ENCODE measurements at regions of chr7 and their contacts with region 1.

Region 1: DNA sequence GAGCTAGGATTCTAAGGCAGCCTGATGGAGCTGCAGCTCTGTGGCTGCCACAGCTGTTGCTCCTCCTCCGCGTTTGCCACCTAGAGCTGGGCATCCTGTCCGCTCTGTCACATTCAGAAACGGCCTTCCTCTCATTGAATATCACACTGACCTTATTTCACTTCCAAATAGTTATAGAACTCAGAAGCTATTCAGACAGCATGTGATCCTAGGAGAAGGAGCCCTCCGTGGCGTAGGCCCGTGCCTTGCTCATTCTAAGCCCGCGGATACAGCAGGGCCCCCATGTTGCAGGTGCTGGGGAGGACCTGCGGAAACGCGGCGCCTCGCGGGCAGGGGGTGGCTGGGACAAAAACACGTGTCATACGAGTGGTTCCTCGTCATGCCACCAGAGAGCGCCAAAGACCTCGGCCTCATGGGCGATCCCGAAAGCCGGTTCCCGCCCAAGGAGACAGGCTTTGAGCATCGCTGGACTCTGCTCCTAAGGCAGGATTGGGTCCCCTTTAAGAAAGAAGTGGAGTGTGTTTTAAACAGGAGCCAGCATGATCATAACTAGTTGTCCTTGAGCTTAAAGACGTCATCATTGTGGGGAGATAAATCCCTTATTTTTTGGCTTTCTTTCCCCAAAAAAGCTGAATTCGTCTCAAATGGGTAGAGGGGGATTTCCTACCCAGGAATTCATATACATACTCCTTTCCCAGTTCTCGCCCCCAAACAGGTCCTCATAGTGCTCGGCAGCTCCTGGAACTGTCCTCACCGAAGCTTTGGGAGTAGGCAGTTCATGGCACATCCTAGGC is 17.9 kb upstream of the FIGNL1 start:
- DNase-seq: peak; percentile 93
- H3K4me3 ChIP-seq: peak overlapping the region in 1 of 2 experiments; percentile 17; a peak in 1 of 4 replicates
- H3K27ac ChIP-seq: peak overlapping the region in 1 of 2 experiments; percentile 88; a peak in 2 of 4 replicates
- H3K4me1 ChIP-seq: peaks cover 0 to 44% of the 10 kb centered on the region in 2 experiments; a peak in 1 of 4 replicates
- H3K27me3 ChIP-seq: peaks cover 3% of the 10 kb centered on the region; the same call in 1 of the 2 replicates
- CTCF ChIP-seq: peak; percentile 98
- EP300 ChIP-seq: no peak; a peak in 1 of 4 replicates
- RAD21 ChIP-seq: peak; percentile 99

Region 2: GRCh38 chr7:50449881-50450589 is 18.0 kb before region 1 on chr7 and contains the start of gene FIGNL1:
- CTCF ChIA-PET with region 1: interaction called, 19 read pairs
- POLR2A ChIA-PET with region 1: interaction called, 3 read pairs
- DNase-seq: peak; percentile 94
- H3K4me3 ChIP-seq: peak within 1 kb of the TSS; percentile 77 to 85
- H3K27ac ChIP-seq: peak within 1 kb of the TSS; percentile 21 to 74; a peak in 3 of 4 replicates
- H3K4me1 ChIP-seq: peaks cover 0 to 20% of the 10 kb centered on the region in 2 experiments; a peak in 2 of 4 replicates
- H3K27me3 ChIP-seq: 0 out of 2 replicates have a peak, but pooled peaks cover 2% of the 10 kb centered on the region
- CTCF ChIP-seq: no peak
- EP300 ChIP-seq: 0 out of 4 replicates have a peak, but pooled peaks of 1 of the 2 experiments have one; percentile 31
- RAD21 ChIP-seq: no peak
- polyA plus RNA-seq, gene FIGNL1: 6.7 and 8.6 TPM in 2 replicates

Region 3: GRCh38 chr7:50491943-50492342 is 23.9 kb after region 1 on chr7:
- CTCF ChIA-PET with region 1: interaction called, 50 read pairs
- POLR2A ChIA-PET with region 1: interaction called, 18 read pairs
- DNase-seq: no peak
- H3K4me3 ChIP-seq: no peak overlapping the region
- H3K27ac ChIP-seq: peak overlapping the region in 1 of 2 experiments; percentile 64; a peak in 2 of 4 replicates
- H3K4me1 ChIP-seq: peaks cover 0 to 30% of the 10 kb centered on the region in 2 experiments; a peak in 2 of 4 replicates
- H3K27me3 ChIP-seq: no peaks in the 10 kb centered on the region
- CTCF ChIP-seq: no peak
- EP300 ChIP-seq: no peak
- RAD21 ChIP-seq: no peak

Region 4: DNA sequence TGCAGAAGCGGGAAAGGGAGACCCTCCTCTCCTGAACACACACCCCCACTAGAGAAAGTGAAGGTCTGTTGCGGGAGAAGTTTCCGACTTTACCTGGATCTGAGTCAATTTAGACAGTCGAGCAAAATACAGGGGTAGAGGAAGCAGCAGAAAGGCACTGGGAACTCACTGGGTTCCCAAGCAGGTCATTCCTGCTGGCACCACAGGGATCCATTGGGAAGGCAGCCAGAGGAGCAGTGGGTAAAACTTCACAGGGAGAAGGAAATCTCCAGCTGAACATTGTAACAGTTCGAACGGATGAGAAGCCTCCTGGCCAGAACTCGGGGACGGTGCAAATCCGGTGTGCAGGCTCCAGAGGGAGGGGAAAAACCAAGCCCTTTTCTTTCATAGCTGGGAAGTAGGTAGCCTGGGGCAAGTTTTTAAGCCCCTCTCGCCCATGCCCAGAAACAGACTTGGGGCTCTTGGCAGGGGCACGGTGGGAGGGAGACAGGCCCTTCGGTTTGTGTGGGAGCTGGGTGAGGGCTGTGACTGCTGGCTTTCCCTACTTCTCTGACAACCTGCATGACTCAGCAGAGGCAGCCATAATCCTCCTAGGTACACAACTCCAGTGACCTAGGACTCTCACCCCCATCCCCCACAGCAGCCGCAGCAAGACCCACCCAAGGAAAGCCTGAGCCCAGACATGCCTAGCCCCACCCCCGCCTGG is 45.3 kb after region 1 on chr7:
- CTCF ChIA-PET with region 1: interaction called, 51 read pairs
- POLR2A ChIA-PET with region 1: interaction called, 7 read pairs
- DNase-seq: no peak
- H3K4me3 ChIP-seq: no peak overlapping the region
- H3K27ac ChIP-seq: peak overlapping the region in 1 of 2 experiments; percentile 64; a peak in 2 of 4 replicates
- H3K4me1 ChIP-seq: peaks cover 0 to 26% of the 10 kb centered on the region in 2 experiments; a peak in 2 of 4 replicates
- H3K27me3 ChIP-seq: 0 out of 2 replicates have a peak, but pooled peaks cover 10% of the 10 kb centered on the region
- CTCF ChIP-seq: no peak
- EP300 ChIP-seq: no peak
- RAD21 ChIP-seq: no peak

Region 5: DNA sequence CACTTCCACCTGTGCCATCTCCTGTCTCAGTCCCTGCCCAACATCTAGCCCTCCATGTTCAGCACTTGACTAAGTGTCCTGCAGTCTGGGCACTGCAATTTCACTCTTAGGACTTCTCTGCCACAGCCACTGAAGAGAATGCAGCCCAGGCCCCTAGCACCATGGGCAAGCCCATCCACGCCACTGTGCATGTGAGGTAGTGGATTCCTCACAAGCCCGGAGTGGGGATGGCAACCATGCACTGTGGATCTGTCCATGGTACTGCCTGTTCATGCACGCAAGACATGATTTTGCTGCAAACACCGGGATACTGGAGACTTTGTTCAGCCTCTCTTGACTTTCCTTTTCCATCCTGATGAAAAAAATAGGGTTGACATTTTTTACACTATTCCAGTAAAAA is 84.9 kb after region 1 on chr7:
- CTCF ChIA-PET with region 1: interaction called, 27 read pairs
- POLR2A ChIA-PET with region 1: interaction called, 4 read pairs
- DNase-seq: no peak
- H3K4me3 ChIP-seq: no peak overlapping the region
- H3K27ac ChIP-seq: peak overlapping the region in 1 of 2 experiments; percentile 17; a peak in 1 of 4 replicates
- H3K4me1 ChIP-seq: peaks cover 0 to 44% of the 10 kb centered on the region in 2 experiments; a peak in 2 of 4 replicates
- H3K27me3 ChIP-seq: peaks cover 28% of the 10 kb centered on the region
- CTCF ChIP-seq: no peak
- EP300 ChIP-seq: no peak
- RAD21 ChIP-seq: no peak

Region 6: DNA sequence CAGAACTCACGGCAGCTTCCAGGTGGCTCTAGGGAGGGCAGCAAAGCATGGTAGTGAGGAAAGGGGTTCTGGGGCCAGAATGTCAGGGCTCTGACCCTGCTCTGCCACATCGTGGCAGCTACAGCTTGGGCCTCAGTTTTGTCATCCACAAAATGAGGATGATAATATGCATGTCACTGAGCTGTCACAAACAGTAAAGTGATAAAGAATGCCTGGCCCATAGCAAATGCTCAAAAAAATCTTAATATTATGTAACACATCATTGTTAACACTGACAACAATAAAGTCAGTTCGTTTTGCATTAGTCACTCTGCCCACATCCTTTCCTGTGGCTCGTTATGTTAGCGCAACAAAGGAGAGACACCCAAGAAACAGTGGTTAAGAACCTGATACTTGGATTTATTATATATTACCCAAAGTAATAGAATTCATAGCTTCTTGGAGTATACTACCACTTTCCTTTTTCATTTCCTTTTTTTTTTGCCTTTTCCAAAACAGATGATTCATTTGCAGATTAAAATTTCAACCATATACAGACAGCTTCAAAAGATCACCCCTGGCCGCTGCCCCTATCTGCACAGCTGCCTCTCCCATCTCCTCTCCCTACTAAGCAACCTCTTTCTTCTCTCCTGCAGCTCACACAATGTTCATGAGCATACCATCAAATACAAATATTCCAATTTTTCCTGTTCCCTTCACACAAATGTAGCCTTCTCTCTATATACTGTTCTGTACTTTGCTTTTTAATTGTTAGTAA is 142.7 kb after region 1 on chr7:
- CTCF ChIA-PET with region 1: interaction called, 28 read pairs
- POLR2A ChIA-PET with region 1: no interaction called
- DNase-seq: no peak
- H3K4me3 ChIP-seq: no peak overlapping the region
- H3K27ac ChIP-seq: peak overlapping the region in 1 of 2 experiments; percentile 6; a peak in 2 of 4 replicates
- H3K4me1 ChIP-seq: peaks cover 4 to 13% of the 10 kb centered on the region in 2 experiments; a peak in 1 of 4 replicates
- H3K27me3 ChIP-seq: no peaks in the 10 kb centered on the region
- CTCF ChIP-seq: no peak
- EP300 ChIP-seq: no peak
- RAD21 ChIP-seq: no peak

Region 7: GRCh38 chr7:51162724-51163329 is 694.8 kb after region 1 on chr7:
- CTCF ChIA-PET with region 1: interaction called, 12 read pairs
- POLR2A ChIA-PET with region 1: no interaction called
- DNase-seq: peak; percentile 64
- H3K4me3 ChIP-seq: no peak overlapping the region; a peak in 1 of 4 replicates
- H3K27ac ChIP-seq: no peak overlapping the region
- H3K4me1 ChIP-seq: no peaks in the 10 kb centered on the region
- H3K27me3 ChIP-seq: peaks cover 12% of the 10 kb centered on the region; the same call in 1 of the 2 replicates
- CTCF ChIP-seq: peak; percentile 99
- EP300 ChIP-seq: no peak
- RAD21 ChIP-seq: peak; percentile 83